Activated CD8-positive, alpha-beta T cell treated with anti-CD3 and anti-CD28 coated beads, Interleukin-2, amount 10 ng/mL, durations not matched to agents 7 days and 5 days (primary cell): ENCODE measurements at regions of chr17 and their contacts with region 1.

Region 1: DNA sequence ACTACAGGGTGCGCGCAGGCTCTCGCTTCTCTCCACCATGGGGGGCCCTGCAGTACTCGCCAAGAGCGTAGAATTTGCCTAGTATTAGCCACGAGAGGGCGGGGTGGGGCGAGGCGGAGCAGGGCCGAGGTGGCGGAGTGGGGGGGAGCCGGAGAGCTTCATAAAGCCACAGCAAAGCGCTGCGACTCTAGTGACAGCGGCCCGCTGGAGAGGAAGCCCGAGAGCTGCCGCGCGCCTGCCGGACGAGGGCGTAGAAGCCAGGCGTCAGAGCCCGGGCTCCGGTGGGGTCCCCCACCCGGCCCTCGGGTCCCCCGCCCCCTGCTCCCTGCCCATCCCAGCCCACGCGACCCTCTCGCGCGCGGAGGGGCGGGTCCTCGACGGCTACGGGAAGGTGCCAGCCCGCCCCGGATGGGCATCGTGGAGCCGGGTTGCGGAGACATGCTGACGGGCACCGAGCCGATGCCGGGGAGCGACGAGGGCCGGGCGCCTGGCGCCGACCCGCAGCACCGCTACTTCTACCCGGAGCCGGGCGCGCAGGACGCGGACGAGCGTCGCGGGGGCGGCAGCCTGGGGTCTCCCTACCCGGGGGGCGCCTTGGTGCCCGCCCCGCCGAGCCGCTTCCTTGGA is at the start of gene TBX21:
- DNase-seq: peak; percentile 97
- ATAC-seq: peak; percentile 87
- H3K4me3 Mint-ChIP-seq: peak within 1 kb of the TSS; percentile 93
- H3K27ac Mint-ChIP-seq: peak within 1 kb of the TSS; percentile 90
- H3K4me1 Mint-ChIP-seq: peaks cover 81% of the 10 kb centered on the region
- H3K27me3 Mint-ChIP-seq: no peaks in the 10 kb centered on the region
- total RNA-seq, gene TBX21: 27.4 to 27.5 TPM

Region 2: GRCh38 chr17:47707056-47707804 is 25.9 kb before region 1 on chr17:
- CTCF ChIA-PET with region 1: interaction called, 474 read pairs
- POLR2A ChIA-PET with region 1: interaction called, 34 read pairs
- DNase-seq: no peak
- ATAC-seq: no peak
- H3K4me3 Mint-ChIP-seq: peak overlapping the region; percentile 15
- H3K27ac Mint-ChIP-seq: peak overlapping the region; percentile 92
- H3K4me1 Mint-ChIP-seq: peaks cover 72% of the 10 kb centered on the region
- H3K27me3 Mint-ChIP-seq: no peaks in the 10 kb centered on the region

Region 3: GRCh38 chr17:47720754-47721533 is 12.2 kb before region 1 on chr17:
- CTCF ChIA-PET with region 1: interaction called, 92 read pairs
- POLR2A ChIA-PET with region 1: interaction called, 28 read pairs
- DNase-seq: peak; percentile 90
- ATAC-seq: peak; percentile 77
- H3K4me3 Mint-ChIP-seq: peak overlapping the region; percentile 60
- H3K27ac Mint-ChIP-seq: peak overlapping the region; percentile 88
- H3K4me1 Mint-ChIP-seq: peaks cover 81% of the 10 kb centered on the region
- H3K27me3 Mint-ChIP-seq: no peaks in the 10 kb centered on the region